WTC11 (cell line): ENCODE measurements at regions of chr2 and their contacts with region 1.

Region 1: GRCh38 chr2:178679891-178680290 is 127.3 kb downstream of the TTN start:
- DNase-seq: no peak
- ATAC-seq: no peak
- H3K4me3 Mint-ChIP-seq: no peak overlapping the region
- H3K27ac Mint-ChIP-seq: no peak overlapping the region
- H3K4me1 Mint-ChIP-seq: no peaks in the 10 kb centered on the region
- H3K27me3 Mint-ChIP-seq: no peaks in the 10 kb centered on the region
- CTCF ChIP-seq: no peak

Region 2: GRCh38 chr2:178700922-178701342 is 21.0 kb after region 1 on chr2:
- CTCF ChIA-PET with region 1: interaction called, 10 read pairs
- POLR2A ChIA-PET with region 1: no interaction called
- DNase-seq: no peak
- ATAC-seq: no peak; the same call in 1 of the 2 replicates
- H3K4me3 Mint-ChIP-seq: no peak overlapping the region
- H3K27ac Mint-ChIP-seq: no peak overlapping the region
- H3K4me1 Mint-ChIP-seq: no peaks in the 10 kb centered on the region
- H3K27me3 Mint-ChIP-seq: no peaks in the 10 kb centered on the region
- CTCF ChIP-seq: peak; percentile 78